Transverse colon (tissue), 4 donors: ENCODE measurements at regions of chr17 and their contacts with region 1.

Region 1: DNA sequence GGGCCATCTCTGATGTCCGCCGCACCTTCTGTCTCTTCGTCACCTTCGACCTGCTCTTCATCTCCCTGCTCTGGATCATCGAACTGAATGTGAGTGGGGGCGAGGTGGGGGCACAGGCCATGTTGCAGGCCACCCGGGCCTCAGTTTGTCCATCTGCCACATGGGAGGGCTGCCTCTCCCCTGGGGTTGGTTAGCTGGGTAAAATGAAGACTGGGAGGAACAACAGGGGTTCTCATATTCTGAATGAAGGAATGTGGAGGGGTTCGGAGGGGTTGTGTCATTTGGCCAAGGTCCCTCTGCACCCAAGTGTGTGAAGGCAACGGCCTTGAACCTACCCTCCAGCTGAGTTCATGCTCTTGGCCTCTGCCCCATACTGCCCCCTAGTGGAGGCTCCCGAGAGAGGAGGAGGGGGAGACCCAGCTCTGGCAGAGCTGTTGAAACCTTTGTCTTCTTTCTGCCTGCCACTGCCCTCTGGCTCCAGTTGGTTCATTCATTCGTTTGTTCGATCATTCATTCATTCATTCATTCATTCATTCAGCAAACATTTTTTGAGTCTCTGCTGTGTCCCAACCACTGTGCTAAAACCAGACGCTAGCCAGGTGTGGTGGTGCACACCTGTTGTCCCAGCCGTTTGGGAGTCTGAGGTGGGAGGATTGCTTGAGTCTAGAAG is 11.4 kb upstream of the TCAP start:
- DNase-seq: peak; percentile 85
- H3K4me3 ChIP-seq: no peak overlapping the region
- H3K27ac ChIP-seq: peak overlapping the region in 3 of 4 donors; percentile 71 to 84 (median 77)
- H3K4me1 ChIP-seq: peaks cover 12 to 38% (median 26%) of the 10 kb centered on the region in 4 donors
- H3K27me3 ChIP-seq: no peaks in the 10 kb centered on the region
- CTCF ChIP-seq: peak; percentile 69 to 88 (median 81)
- EP300 ChIP-seq: no peak
- POLR2A ChIP-seq: no peak

Region 2: DNA sequence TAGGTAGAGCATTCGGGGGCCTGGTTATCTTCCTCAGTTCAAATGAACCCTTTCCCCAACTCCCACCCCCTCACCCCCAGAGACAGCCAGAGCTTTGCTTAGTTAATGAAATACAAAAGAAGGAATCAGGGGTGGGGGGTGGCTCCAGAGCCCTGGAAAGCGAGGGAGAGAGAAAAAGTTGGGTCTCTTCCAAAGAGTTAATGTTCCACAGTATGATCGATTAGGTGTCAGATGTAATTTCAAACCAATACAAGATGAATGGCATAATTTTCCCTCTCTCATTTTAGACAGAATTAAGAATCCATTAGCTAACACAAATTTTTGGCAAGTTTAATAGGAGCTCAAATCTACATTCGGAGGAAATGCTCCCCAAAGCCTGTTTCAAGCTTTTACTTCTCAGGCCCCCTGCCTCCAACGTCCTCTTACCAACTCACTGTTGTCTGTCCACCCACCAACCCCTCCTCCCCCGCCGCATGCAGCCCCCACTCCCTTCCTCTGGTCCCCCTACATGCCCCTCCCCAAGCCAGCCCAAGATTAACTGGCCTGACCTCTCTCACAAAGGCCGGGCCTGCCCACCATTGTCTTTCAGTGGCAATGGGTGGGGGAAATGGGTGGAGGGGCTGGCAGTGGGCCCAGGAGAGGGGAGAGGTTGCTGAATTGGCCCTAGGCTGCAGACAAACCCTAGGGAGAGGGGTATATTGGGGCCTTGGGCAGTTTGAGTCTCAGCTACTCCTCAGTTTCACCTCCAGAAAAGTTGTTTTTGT is 74.3 kb before region 1 on chr17:
- in situ Hi-C with region 1: no loop called
- intact Hi-C with region 1: loop called (anchors 10 kb)
- DNase-seq: no peak
- H3K4me3 ChIP-seq: no peak overlapping the region
- H3K27ac ChIP-seq: no peak overlapping the region
- H3K4me1 ChIP-seq: no peaks in the 10 kb centered on the region
- H3K27me3 ChIP-seq: no peaks in the 10 kb centered on the region
- CTCF ChIP-seq: no peak
- EP300 ChIP-seq: no peak
- POLR2A ChIP-seq: no peak